ENCODE measurements at regions of chr17 and their contacts with region 1.

Region 1: GRCh38 chr17:50094753-50095619 is at the start of gene PDK2:
- DNase-seq: peak; percentile 92 to 99 (median 97)
- ATAC-seq: peak; percentile 98
- H3K4me3 ChIP-seq: peak within 1 kb of the TSS; percentile 92
- H3K4me3 Mint-ChIP-seq: peak within 1 kb of the TSS; percentile 91 to 100 (median 96)
- H3K27ac ChIP-seq: peak within 1 kb of the TSS; percentile 84
- H3K27ac Mint-ChIP-seq: peak within 1 kb of the TSS; percentile 87 to 98 (median 95)
- H3K4me1 ChIP-seq: peaks cover 12 to 14% of the 10 kb centered on the region in 2 donors
- H3K4me1 Mint-ChIP-seq: peaks cover 27 to 41% (median 32%) of the 10 kb centered on the region in 7 donors
- H3K27me3 ChIP-seq: no peaks in the 10 kb centered on the region
- H3K27me3 Mint-ChIP-seq: no peaks in the 10 kb centered on the region
- total RNA-seq, gene PDK2: 16.7 to 48.3 (median 22.5) TPM

Region 2: GRCh38 chr17:49575579-49576087 is 519.4 kb before region 1 on chr17 and contains the start of gene NXPH3:
- CTCF ChIA-PET with region 1: no interaction called
- POLR2A ChIA-PET with region 1: no interaction called
- intact Hi-C with region 1: loop called in 1 of 2 experiments (anchors 10 kb)
- DNase-seq: peak; percentile 29 to 87 (median 61)
- ATAC-seq: peak; percentile 84
- H3K4me3 ChIP-seq: peak within 1 kb of the TSS; percentile 41
- H3K4me3 Mint-ChIP-seq: peak within 1 kb of the TSS; percentile 27 to 83 (median 72)
- H3K27ac ChIP-seq: no peak within 1 kb of the TSS
- H3K27ac Mint-ChIP-seq: no peak within 1 kb of the TSS
- H3K4me1 ChIP-seq: peaks cover 4 to 9% of the 10 kb centered on the region in 2 donors
- H3K4me1 Mint-ChIP-seq: peaks cover 0 to 13% (median 4%) of the 10 kb centered on the region in 7 donors
- H3K27me3 ChIP-seq: peaks cover 4 to 15% of the 10 kb centered on the region in 2 donors
- H3K27me3 Mint-ChIP-seq: peaks cover 28 to 76% (median 29%) of the 10 kb centered on the region in 5 donors
- total RNA-seq, gene NXPH3: not detected

Region 3: GRCh38 chr17:49851387-49852291 is 243.3 kb before region 1 on chr17:
- CTCF ChIA-PET with region 1: no interaction called
- POLR2A ChIA-PET with region 1: no interaction called
- intact Hi-C with region 1: loop called in 1 of 2 experiments (anchors 10 kb)
- DNase-seq: peak; percentile 57 to 75 (median 67)
- ATAC-seq: peak; percentile 81
- H3K4me3 ChIP-seq: peak overlapping the region; percentile 67
- H3K4me3 Mint-ChIP-seq: peak overlapping the region; percentile 89 to 98 (median 94)
- H3K27ac ChIP-seq: peak overlapping the region; percentile 81
- H3K27ac Mint-ChIP-seq: peak overlapping the region; percentile 83 to 97 (median 95)
- H3K4me1 ChIP-seq: peaks cover 13 to 14% of the 10 kb centered on the region in 2 donors
- H3K4me1 Mint-ChIP-seq: peaks cover 10 to 30% (median 19%) of the 10 kb centered on the region in 7 donors
- H3K27me3 ChIP-seq: no peaks in the 10 kb centered on the region
- H3K27me3 Mint-ChIP-seq: peaks cover 0 to 9% (median 0%) of the 10 kb centered on the region in 5 donors

Region 4: GRCh38 chr17:49880291-49881053 is 214.5 kb before region 1 on chr17:
- CTCF ChIA-PET with region 1: no interaction called
- POLR2A ChIA-PET with region 1: no interaction called
- intact Hi-C with region 1: no loop called
- DNase-seq: peak; percentile 31 to 77 (median 58)
- ATAC-seq: peak; percentile 95
- H3K4me3 ChIP-seq: no peak overlapping the region
- H3K4me3 Mint-ChIP-seq: peak overlapping the region in 8 of 10 donors; percentile 21 to 74 (median 44)
- H3K27ac ChIP-seq: no peak overlapping the region
- H3K27ac Mint-ChIP-seq: no peak overlapping the region
- H3K4me1 ChIP-seq: peaks cover 3 to 7% of the 10 kb centered on the region in 2 donors
- H3K4me1 Mint-ChIP-seq: peaks cover 0 to 7% (median 5%) of the 10 kb centered on the region in 7 donors
- H3K27me3 ChIP-seq: peaks cover 4 to 9% of the 10 kb centered on the region in 2 donors
- H3K27me3 Mint-ChIP-seq: peaks cover 20 to 52% (median 43%) of the 10 kb centered on the region in 5 donors

Region 5: DNA sequence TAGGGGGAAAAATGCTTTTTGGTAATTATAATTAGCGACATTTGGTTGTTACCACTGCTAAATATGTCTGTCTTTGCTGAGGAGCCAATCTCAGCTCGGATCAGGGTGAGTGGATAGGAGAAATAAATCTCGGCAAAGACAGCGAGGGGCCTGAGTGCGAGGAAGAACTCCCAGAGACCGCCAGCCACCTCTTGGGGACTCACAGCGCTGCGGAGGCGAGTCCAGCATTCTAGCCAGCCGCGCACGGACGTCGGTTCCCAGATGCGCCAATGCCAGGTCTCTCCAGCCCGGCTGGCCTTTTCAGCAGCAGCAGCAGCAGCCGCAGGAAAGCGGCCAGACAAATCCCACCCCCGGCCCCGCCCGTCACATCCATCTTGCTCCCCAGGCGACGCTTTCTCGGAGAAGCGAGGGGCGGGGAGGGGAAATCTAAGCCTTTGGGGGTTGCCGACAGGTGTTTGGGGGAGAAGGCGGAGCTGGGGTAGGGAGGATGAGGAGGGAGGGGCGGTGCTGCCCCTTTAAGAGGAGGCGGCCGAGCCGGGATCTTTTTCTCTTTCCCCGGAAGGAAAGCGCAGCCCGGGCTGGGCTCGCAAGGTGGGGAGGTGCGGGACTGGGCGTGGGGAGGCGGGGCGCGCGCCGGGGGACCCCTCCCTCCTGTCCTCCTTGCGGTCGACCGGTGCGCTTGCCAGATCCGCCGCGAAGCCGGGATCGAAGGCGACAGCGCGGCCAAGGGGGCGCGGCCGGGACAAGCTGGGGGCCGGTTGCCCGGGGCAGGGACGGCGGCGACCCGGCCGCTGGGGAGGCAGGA is 39.4 kb before region 1 on chr17 and contains the start of gene ITGA3:
- CTCF ChIA-PET with region 1: interaction called, 5 read pairs
- POLR2A ChIA-PET with region 1: interaction called, 11 read pairs
- intact Hi-C with region 1: loop called (anchors 1 kb)
- DNase-seq: peak; percentile 28 to 78 (median 45)
- ATAC-seq: peak; percentile 76
- H3K4me3 ChIP-seq: peak within 1 kb of the TSS; percentile 60
- H3K4me3 Mint-ChIP-seq: peak within 1 kb of the TSS; percentile 84 to 96 (median 92)
- H3K27ac ChIP-seq: peak within 1 kb of the TSS; percentile 54
- H3K27ac Mint-ChIP-seq: peak within 1 kb of the TSS; percentile 38 to 90 (median 82)
- H3K4me1 ChIP-seq: peaks cover 0 to 7% of the 10 kb centered on the region in 2 donors
- H3K4me1 Mint-ChIP-seq: peaks cover 12 to 48% (median 20%) of the 10 kb centered on the region in 7 donors
- H3K27me3 ChIP-seq: no peaks in the 10 kb centered on the region
- H3K27me3 Mint-ChIP-seq: peaks cover 0 to 7% (median 0%) of the 10 kb centered on the region in 5 donors
- total RNA-seq, gene ITGA3: 4.0 to 14.6 (median 8.6) TPM

Region 6: DNA sequence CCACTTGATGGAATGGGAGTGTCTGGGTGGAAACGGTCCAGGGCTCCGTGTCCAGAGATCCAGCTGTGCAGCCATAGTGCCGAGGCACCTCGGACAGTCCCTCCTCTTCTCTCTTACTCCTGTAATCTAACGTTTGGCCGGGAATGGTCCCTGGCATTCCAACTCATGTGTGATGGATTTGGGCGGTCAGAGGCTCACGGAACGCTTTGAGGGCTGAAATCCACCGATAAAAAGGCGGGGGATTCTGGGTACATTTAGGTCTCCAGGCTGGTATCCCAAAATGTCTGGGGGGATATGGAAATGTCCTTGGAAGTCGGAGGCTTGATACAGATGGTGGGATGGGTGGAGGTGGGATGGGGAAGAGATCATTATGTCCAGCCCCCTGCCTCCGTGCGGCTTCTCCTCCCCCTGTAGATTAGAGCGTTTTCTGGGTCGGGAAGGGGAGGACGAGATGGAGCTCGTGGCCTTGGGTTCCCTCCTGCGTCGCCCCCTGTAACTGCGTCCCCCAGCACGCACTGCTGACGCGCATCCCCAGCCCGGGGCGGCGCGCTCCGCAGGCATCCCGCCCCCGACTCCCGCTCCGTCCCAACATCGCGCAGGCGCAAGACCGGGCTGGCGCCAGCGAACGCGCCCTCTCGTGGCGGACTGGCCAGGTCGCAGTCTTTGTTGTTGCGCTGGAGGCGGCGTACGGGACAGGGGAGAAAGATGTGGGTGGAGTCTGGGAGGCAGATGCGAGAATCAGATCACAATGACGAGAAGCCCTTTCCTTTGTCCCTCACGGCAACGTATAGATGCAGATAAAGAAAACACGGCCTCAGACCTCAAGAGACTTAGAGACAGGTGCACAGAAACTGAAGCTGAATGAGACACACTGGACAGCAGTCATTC is 66.3 kb after region 1 on chr17:
- CTCF ChIA-PET with region 1: interaction called, 6 read pairs
- POLR2A ChIA-PET with region 1: interaction called, 3 read pairs
- intact Hi-C with region 1: loop called (anchors 1 kb)
- DNase-seq: peak; percentile 89 to 98 (median 93)
- ATAC-seq: peak; percentile 99
- H3K4me3 ChIP-seq: peak overlapping the region; percentile 63
- H3K4me3 Mint-ChIP-seq: peak overlapping the region; percentile 66 to 87 (median 78)
- H3K27ac ChIP-seq: peak overlapping the region; percentile 70
- H3K27ac Mint-ChIP-seq: peak overlapping the region; percentile 64 to 99 (median 97)
- H3K4me1 ChIP-seq: peaks cover 18 to 34% of the 10 kb centered on the region in 2 donors
- H3K4me1 Mint-ChIP-seq: peaks cover 22 to 47% (median 39%) of the 10 kb centered on the region in 7 donors
- H3K27me3 ChIP-seq: no peaks in the 10 kb centered on the region
- H3K27me3 Mint-ChIP-seq: peaks cover 0 to 12% (median 0%) of the 10 kb centered on the region in 5 donors

Region 7: DNA sequence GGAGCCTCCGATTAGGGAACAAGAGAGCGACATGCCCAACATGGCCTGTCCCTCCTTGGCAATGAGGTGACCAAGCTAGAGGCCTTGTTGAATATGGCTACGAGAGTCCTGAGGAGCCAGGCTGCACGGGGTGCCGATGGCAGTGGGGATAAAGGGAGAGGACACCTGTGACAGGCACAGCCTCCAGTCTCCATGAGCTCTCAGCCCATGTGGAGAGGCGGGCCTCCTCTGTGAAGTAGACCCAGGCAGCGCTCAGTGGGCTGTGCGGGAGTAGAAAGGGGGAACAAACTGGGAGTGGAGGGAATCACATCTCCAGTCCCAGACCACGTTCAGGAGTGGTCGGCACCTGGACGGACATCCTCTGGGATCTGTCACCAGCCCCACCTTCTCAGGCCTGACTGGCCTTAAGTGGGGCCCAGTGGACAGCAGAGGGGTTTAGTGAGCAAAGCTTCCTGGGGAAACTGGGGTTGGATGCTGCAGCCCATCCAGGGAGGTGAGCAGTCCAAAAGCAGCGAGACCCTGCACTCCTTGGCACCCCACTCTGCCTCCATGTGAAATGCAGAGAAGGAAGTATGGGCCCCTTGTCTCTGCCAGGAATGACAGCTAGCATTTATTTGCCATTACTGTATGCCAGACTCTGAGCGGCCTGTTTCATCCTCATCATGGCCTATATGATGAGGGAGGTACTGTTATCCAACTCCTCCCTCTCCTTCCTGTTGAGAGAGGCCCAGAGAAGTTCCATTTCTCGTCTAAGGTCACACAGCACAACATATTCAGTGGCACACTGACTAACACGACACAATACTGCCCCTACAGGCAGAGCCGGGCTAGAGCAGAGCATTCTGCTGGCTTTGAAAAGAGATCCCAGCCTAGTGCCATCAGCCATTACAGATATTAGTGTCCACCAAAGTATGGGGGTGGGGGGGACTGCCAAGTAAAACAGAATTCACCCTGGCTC is 174.8 kb after region 1 on chr17:
- CTCF ChIA-PET with region 1: interaction called, 3 read pairs
- POLR2A ChIA-PET with region 1: no interaction called
- intact Hi-C with region 1: loop called in 1 of 2 experiments (anchors 1 kb)
- DNase-seq: peak in 8 of 9 donors; percentile 12 to 58 (median 35)
- ATAC-seq: peak; percentile 85
- H3K4me3 ChIP-seq: no peak overlapping the region
- H3K4me3 Mint-ChIP-seq: no peak overlapping the region
- H3K27ac ChIP-seq: no peak overlapping the region
- H3K27ac Mint-ChIP-seq: no peak overlapping the region
- H3K4me1 ChIP-seq: no peaks in the 10 kb centered on the region
- H3K4me1 Mint-ChIP-seq: peaks cover 5 to 14% (median 7%) of the 10 kb centered on the region in 7 donors
- H3K27me3 ChIP-seq: peaks cover 0 to 3% of the 10 kb centered on the region in 2 donors
- H3K27me3 Mint-ChIP-seq: peaks cover 13 to 22% (median 17%) of the 10 kb centered on the region in 5 donors

Region 8: DNA sequence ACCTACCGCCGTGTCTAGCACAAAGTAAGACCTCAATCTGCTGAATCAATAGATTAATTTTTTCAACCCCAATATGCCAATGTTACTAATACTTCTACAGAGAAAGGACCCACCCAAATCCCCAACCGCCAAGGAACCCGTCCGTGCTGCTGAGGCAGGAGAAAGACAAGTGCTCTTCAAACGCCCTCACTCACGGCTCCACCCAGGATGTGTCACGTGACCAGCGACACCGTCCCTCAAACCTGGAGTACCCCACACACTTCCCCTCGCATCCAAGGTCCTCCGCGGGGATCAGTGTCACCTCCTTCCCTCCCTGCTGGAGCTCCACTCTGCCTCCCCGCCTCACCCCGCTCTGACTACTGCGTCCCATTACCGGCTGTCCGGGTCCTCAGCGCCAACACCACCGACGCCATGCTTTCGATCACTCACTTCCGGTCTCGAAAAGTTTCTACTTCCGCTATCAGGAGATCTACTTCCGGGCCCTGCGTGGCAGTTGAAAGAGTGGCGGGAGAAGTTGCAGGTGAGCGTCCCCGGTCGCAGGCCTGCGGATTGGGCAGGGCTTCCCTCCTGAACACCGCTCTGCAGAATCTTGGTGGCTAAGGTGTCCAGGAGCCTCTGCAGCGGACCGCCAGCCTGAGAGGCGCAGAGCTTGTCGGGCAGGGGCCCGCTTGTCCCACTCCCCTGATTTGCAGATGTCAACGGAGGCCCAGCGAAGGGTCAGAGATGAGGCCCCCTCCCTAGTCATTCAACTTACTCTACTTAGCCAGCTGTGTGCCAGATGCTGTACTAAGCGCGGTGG is 278.0 kb after region 1 on chr17 and contains the starts of genes EME1 and MRPL27:
- CTCF ChIA-PET with region 1: no interaction called
- POLR2A ChIA-PET with region 1: no interaction called
- intact Hi-C with region 1: loop called in 1 of 2 experiments (anchors 1 kb)
- DNase-seq: peak; percentile 81 to 95 (median 92)
- ATAC-seq: peak; percentile 94
- H3K4me3 ChIP-seq: peak within 1 kb of the TSS; percentile 99
- H3K4me3 Mint-ChIP-seq: peak within 1 kb of the TSS; percentile 92 to 100 (median 98)
- H3K27ac ChIP-seq: peak within 1 kb of the TSS; percentile 99
- H3K27ac Mint-ChIP-seq: peak within 1 kb of the TSS; percentile 97 to 100 (median 99)
- H3K4me1 ChIP-seq: peaks cover 9 to 13% of the 10 kb centered on the region in 2 donors
- H3K4me1 Mint-ChIP-seq: peaks cover 18 to 41% (median 31%) of the 10 kb centered on the region in 7 donors
- H3K27me3 ChIP-seq: no peaks in the 10 kb centered on the region
- H3K27me3 Mint-ChIP-seq: no peaks in the 10 kb centered on the region
- total RNA-seq, gene EME1: 0.61 to 17.5 (median 2.2) TPM
- total RNA-seq, gene MRPL27: 29.5 to 64.7 (median 32.0) TPM